ENCODE measurements at regions of chr10 and their contacts with region 1.

Region 1: GRCh38 chr10:116787893-116788665 is 45.7 kb upstream of the HSPA12A start:
- DNase-seq: peak; percentile 64 to 79 (median 73)
- H3K4me3 ChIP-seq: peak overlapping the region; percentile 40
- H3K4me3 Mint-ChIP-seq: peak overlapping the region; percentile 32 to 86 (median 66)
- H3K27ac ChIP-seq: no peak overlapping the region
- H3K27ac Mint-ChIP-seq: peak overlapping the region in 6 of 8 donors; percentile 71 to 92 (median 90)
- H3K4me1 ChIP-seq: peaks cover 7% of the 10 kb centered on the region
- H3K4me1 Mint-ChIP-seq: peaks cover 14 to 17% (median 15%) of the 10 kb centered on the region in 3 donors
- H3K27me3 ChIP-seq: no peaks in the 10 kb centered on the region
- H3K27me3 Mint-ChIP-seq: peaks cover 16% of the 10 kb centered on the region in 2 donors

Region 2: DNA sequence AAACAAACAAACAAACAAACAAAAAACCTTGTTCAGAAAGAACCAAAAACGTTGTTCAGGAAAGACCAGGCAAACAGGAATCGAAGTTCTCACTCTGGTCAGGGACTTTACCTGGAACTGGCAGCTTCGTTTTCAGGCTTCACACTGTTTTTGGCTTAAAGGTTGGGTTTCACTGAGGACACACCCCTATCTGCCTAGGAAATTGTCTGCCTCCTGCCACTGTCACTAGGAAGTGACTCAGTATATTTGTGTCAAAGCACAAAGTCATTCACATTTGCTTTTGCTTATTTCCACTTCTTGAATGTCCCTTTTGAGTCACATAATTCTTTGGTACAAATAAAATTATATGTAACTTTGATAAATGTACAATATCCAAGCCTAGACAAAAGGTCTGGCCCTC is 322.5 kb before region 1 on chr10:
- CTCF ChIA-PET with region 1: no interaction called
- POLR2A ChIA-PET with region 1: no interaction called
- DNase-seq: no peak
- H3K4me3 ChIP-seq: no peak overlapping the region
- H3K4me3 Mint-ChIP-seq: no peak overlapping the region
- H3K27ac ChIP-seq: no peak overlapping the region
- H3K27ac Mint-ChIP-seq: no peak overlapping the region
- H3K4me1 ChIP-seq: no peaks in the 10 kb centered on the region
- H3K4me1 Mint-ChIP-seq: no peaks in the 10 kb centered on the region
- H3K27me3 ChIP-seq: no peaks in the 10 kb centered on the region
- H3K27me3 Mint-ChIP-seq: peaks cover 0 to 2% of the 10 kb centered on the region in 2 donors

Region 3: GRCh38 chr10:116669832-116670644 is 118.0 kb before region 1 on chr10:
- CTCF ChIA-PET with region 1: no interaction called
- POLR2A ChIA-PET with region 1: no interaction called
- DNase-seq: no peak
- H3K4me3 ChIP-seq: no peak overlapping the region
- H3K4me3 Mint-ChIP-seq: no peak overlapping the region
- H3K27ac ChIP-seq: no peak overlapping the region
- H3K27ac Mint-ChIP-seq: no peak overlapping the region
- H3K4me1 ChIP-seq: no peaks in the 10 kb centered on the region
- H3K4me1 Mint-ChIP-seq: no peaks in the 10 kb centered on the region
- H3K27me3 ChIP-seq: no peaks in the 10 kb centered on the region
- H3K27me3 Mint-ChIP-seq: peaks cover 4 to 16% of the 10 kb centered on the region in 2 donors

Region 4: GRCh38 chr10:116753759-116754158 is 34.3 kb before region 1 on chr10:
- CTCF ChIA-PET with region 1: no interaction called
- POLR2A ChIA-PET with region 1: no interaction called
- DNase-seq: peak in 1 of 5 donors; percentile 7
- H3K4me3 ChIP-seq: no peak overlapping the region
- H3K4me3 Mint-ChIP-seq: no peak overlapping the region
- H3K27ac ChIP-seq: no peak overlapping the region
- H3K27ac Mint-ChIP-seq: no peak overlapping the region
- H3K4me1 ChIP-seq: no peaks in the 10 kb centered on the region
- H3K4me1 Mint-ChIP-seq: no peaks in the 10 kb centered on the region
- H3K27me3 ChIP-seq: peaks cover 4% of the 10 kb centered on the region
- H3K27me3 Mint-ChIP-seq: peaks cover 10 to 21% of the 10 kb centered on the region in 2 donors

Region 5: DNA sequence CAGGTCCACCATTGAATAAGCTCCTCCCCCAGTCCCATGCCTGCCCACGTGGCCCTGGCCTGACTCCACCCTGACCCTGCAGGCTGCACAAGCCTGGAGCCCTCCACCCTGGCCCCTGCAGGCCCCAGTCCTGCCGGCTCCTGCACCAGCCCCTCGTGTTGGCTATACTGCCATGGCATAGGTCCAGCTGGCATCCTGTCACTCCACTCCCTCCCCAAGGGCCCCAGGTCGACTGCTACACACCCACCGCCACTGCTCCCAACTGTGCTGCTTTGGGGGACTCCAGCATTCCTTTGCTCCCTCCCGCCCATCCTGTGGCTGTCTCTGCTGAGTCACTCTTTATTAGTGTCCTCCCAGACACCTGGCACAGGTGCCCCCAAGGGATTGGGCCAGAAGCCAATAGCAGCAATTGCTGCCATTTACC is 13.3 kb before region 1 on chr10:
- CTCF ChIA-PET with region 1: interaction called, 29 read pairs
- POLR2A ChIA-PET with region 1: no interaction called
- DNase-seq: no peak
- H3K4me3 ChIP-seq: no peak overlapping the region
- H3K4me3 Mint-ChIP-seq: no peak overlapping the region
- H3K27ac ChIP-seq: no peak overlapping the region
- H3K27ac Mint-ChIP-seq: no peak overlapping the region
- H3K4me1 ChIP-seq: no peaks in the 10 kb centered on the region
- H3K4me1 Mint-ChIP-seq: no peaks in the 10 kb centered on the region
- H3K27me3 ChIP-seq: no peaks in the 10 kb centered on the region
- H3K27me3 Mint-ChIP-seq: peaks cover 7 to 8% of the 10 kb centered on the region in 2 donors

Region 6: DNA sequence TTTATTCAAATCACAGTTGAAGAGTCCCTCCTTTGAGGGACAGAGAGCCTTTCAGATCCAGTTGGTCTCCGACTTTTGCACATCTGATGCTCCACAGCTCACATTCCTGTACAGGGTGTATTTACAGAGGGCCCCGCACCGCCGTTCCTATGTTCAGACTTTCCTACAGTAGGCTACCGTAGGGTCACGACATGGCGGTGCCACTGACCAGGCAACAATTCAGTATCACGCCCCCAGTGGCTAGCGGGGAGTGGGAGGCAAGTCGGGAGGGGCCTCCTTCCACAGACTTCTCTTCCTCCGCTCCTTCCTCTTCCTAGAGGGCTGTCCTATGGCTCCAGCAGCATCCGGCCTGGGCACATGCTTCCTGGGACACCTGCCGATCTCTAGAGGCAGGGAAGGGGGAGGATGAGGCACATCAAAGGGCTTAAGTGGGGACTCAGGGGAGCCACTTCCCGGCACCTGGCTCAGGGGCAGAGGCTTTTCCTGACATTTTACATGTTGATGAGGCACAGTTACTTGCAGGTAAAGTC is 20.7 kb after region 1 on chr10:
- CTCF ChIA-PET with region 1: interaction called, 15 read pairs
- POLR2A ChIA-PET with region 1: no interaction called
- DNase-seq: no peak
- H3K4me3 ChIP-seq: no peak overlapping the region
- H3K4me3 Mint-ChIP-seq: no peak overlapping the region
- H3K27ac ChIP-seq: no peak overlapping the region
- H3K27ac Mint-ChIP-seq: no peak overlapping the region
- H3K4me1 ChIP-seq: no peaks in the 10 kb centered on the region
- H3K4me1 Mint-ChIP-seq: no peaks in the 10 kb centered on the region
- H3K27me3 ChIP-seq: no peaks in the 10 kb centered on the region
- H3K27me3 Mint-ChIP-seq: peaks cover 9 to 15% of the 10 kb centered on the region in 2 donors

Region 7: DNA sequence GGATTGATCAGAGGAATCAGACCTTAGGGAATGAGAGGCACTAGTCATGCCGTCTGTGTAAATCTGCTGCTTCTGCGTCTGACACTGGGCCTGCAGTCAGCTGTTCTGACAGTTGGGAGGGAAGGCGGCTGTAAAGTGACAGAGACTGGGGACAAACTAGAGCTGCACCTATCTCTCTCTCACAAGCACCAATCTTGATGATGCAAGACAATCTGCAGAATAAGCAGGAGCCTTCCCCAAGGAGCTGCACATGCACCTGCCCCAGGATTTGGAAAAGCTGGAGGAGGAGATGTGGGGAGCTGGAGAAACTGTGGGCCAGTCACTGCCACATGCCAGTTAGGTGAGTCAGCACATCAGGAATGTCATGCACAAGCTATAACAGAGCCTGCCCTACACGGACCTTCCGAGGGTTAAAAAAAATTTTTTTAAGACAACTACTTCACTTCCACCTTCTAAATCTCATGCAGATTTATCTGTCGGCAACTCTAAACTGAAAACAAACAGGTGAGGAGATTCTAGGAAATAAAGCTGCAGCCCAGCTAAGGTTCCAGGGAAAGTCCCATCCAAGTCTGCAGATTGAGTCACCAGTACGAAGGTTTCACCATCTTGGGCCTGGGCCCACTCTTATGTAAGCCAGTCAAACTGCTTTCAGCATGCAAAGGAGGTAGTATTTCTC is 100.4 kb after region 1 on chr10:
- CTCF ChIA-PET with region 1: no interaction called
- POLR2A ChIA-PET with region 1: no interaction called
- DNase-seq: no peak
- H3K4me3 ChIP-seq: no peak overlapping the region
- H3K4me3 Mint-ChIP-seq: no peak overlapping the region
- H3K27ac ChIP-seq: no peak overlapping the region
- H3K27ac Mint-ChIP-seq: no peak overlapping the region
- H3K4me1 ChIP-seq: no peaks in the 10 kb centered on the region
- H3K4me1 Mint-ChIP-seq: no peaks in the 10 kb centered on the region
- H3K27me3 ChIP-seq: no peaks in the 10 kb centered on the region
- H3K27me3 Mint-ChIP-seq: peaks cover 4 to 16% of the 10 kb centered on the region in 2 donors

Region 8: DNA sequence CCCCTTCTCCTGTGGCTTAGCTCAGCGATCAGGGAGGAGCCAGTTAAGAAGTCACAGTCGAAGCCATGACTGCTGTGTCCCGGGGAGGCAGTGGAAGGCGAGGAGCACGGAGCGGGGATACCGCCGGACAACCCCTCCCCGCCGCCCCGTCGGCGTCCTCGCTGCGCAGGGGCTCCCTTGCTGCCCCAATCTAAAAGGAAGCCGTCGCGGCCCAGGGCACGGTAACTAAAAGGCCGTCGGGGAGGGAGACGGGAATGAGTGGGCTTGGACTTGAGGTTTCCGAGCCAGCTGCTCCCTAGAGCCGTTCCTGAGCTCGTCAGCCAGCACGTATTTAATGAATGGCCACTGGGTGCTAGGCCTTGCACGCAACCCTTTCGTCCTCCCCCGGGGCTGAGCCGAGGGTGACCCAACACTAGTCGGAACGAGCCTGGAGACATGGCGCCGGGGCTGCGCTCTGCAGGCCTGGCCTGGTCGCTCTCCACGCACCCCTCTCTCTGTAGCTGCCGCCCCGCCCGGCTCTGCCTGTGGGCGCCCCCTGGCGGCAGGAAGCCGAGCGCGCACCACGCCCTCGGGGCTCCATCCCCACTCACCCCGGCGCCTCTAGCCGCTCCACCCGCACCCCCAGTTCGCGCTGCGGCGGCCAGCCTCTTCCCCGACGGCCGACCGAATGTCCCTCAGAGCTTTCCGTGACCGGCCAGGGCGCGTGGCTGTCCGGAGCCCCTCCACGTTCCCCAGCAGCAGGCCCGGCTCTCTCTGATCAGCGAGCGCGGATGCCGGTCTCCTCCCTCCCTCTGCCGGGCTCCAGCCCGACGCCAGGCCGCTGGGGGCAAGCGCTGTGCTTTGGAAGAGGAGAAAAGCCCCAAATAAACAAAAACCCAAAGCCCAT is 380.0 kb after region 1 on chr10:
- CTCF ChIA-PET with region 1: interaction called, 10 read pairs
- POLR2A ChIA-PET with region 1: no interaction called
- DNase-seq: peak; percentile 39 to 68 (median 49)
- H3K4me3 ChIP-seq: peak overlapping the region; percentile 28
- H3K4me3 Mint-ChIP-seq: peak overlapping the region in 5 of 7 donors; percentile 45 to 88 (median 66)
- H3K27ac ChIP-seq: no peak overlapping the region
- H3K27ac Mint-ChIP-seq: no peak overlapping the region
- H3K4me1 ChIP-seq: peaks cover 13% of the 10 kb centered on the region
- H3K4me1 Mint-ChIP-seq: peaks cover 19 to 46% (median 30%) of the 10 kb centered on the region in 3 donors
- H3K27me3 ChIP-seq: peaks cover 71% of the 10 kb centered on the region
- H3K27me3 Mint-ChIP-seq: peaks cover 64 to 71% of the 10 kb centered on the region in 2 donors

Region 9: GRCh38 chr10:117174439-117175214 is 386.5 kb after region 1 on chr10:
- CTCF ChIA-PET with region 1: interaction called, 19 read pairs
- POLR2A ChIA-PET with region 1: no interaction called
- DNase-seq: peak; percentile 59 to 82 (median 68)
- H3K4me3 ChIP-seq: peak overlapping the region; percentile 59
- H3K4me3 Mint-ChIP-seq: peak overlapping the region; percentile 83 to 94 (median 91)
- H3K27ac ChIP-seq: no peak overlapping the region
- H3K27ac Mint-ChIP-seq: peak overlapping the region in 6 of 8 donors; percentile 5 to 85 (median 72)
- H3K4me1 ChIP-seq: peaks cover 14% of the 10 kb centered on the region
- H3K4me1 Mint-ChIP-seq: peaks cover 12 to 19% (median 18%) of the 10 kb centered on the region in 3 donors
- H3K27me3 ChIP-seq: peaks cover 16% of the 10 kb centered on the region
- H3K27me3 Mint-ChIP-seq: peaks cover 14 to 41% of the 10 kb centered on the region in 2 donors

Measured in CD8-positive, alpha-beta memory T cell (primary cell).